ENCODE measurements at regions of chr3 and their contacts with region 1.

Region 1: DNA sequence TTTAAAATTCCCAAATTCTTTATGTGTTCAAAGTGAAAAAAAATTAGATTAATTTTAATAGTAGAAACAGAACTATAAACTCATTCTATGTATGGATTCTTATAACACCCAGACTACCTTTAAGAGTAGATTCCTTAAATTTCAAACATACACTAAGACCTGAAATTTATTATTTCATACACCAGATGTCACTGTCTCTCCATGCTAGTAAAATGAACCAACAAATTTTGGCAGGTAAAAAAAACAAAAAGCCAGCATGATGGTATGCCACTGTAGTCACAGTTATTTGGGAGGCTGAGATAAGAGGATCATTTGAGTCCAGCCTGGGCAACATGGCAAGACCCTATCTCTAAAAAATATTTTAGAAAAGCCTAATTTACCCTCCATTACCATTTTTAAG is 461.3 kb upstream of the NAALADL2 start:
- DNase-seq: peak; percentile 31
- H3K4me3 ChIP-seq: no peak overlapping the region
- H3K27ac ChIP-seq: no peak overlapping the region
- H3K4me1 ChIP-seq: no peaks in the 10 kb centered on the region
- H3K27me3 ChIP-seq: no peaks in the 10 kb centered on the region
- CTCF ChIP-seq: peak; percentile 28 to 59

Region 2: GRCh38 chr3:173993299-173993698 is 404.5 kb before region 1 on chr3:
- CTCF ChIA-PET with region 1: no interaction called
- dilution Hi-C with region 1: no loop called
- in situ Hi-C with region 1: no loop called
- intact Hi-C with region 1: loop called (anchors 5 kb)
- DNase-seq: peak; percentile 11
- H3K4me3 ChIP-seq: no peak overlapping the region
- H3K27ac ChIP-seq: no peak overlapping the region
- H3K4me1 ChIP-seq: no peaks in the 10 kb centered on the region
- H3K27me3 ChIP-seq: no peaks in the 10 kb centered on the region
- CTCF ChIP-seq: peak in 1 of 2 donors; percentile 47

Region 3: GRCh38 chr3:174620138-174620537 is 222.3 kb after region 1 on chr3:
- CTCF ChIA-PET with region 1: no interaction called
- dilution Hi-C with region 1: no loop called
- in situ Hi-C with region 1: no loop called
- intact Hi-C with region 1: loop called (anchors 2 kb)
- DNase-seq: peak; percentile 9
- H3K4me3 ChIP-seq: no peak overlapping the region
- H3K27ac ChIP-seq: no peak overlapping the region
- H3K4me1 ChIP-seq: no peaks in the 10 kb centered on the region
- H3K27me3 ChIP-seq: no peaks in the 10 kb centered on the region
- CTCF ChIP-seq: peak; percentile 38 to 46

Region 4: DNA sequence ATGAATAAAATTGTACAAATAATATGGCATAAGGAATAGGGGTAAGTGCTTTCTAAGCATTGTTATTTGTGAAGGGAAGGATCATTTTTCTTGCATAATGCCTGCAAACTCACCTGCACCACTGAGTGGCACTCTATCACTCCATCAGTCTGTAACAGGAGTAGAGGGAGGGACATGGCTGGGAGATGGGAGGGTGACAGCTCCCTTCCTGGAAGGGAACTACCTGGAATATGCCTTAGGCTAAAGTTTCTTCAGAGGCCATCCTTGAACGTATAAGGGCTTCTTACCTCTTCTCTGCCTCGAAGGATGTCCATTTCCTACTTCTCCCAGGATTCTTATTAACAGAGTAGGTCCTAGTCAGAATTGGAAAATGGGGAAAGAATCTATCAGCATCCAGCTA is 464.3 kb after region 1 on chr3:
- CTCF ChIA-PET with region 1: interaction called, 3 read pairs
- dilution Hi-C with region 1: no loop called
- in situ Hi-C with region 1: no loop called
- intact Hi-C with region 1: loop called (anchors 5 kb)
- DNase-seq: peak; percentile 66
- H3K4me3 ChIP-seq: no peak overlapping the region
- H3K27ac ChIP-seq: no peak overlapping the region
- H3K4me1 ChIP-seq: peaks cover 22% of the 10 kb centered on the region
- H3K27me3 ChIP-seq: no peaks in the 10 kb centered on the region
- CTCF ChIP-seq: peak; percentile 64 to 73

Region 5: DNA sequence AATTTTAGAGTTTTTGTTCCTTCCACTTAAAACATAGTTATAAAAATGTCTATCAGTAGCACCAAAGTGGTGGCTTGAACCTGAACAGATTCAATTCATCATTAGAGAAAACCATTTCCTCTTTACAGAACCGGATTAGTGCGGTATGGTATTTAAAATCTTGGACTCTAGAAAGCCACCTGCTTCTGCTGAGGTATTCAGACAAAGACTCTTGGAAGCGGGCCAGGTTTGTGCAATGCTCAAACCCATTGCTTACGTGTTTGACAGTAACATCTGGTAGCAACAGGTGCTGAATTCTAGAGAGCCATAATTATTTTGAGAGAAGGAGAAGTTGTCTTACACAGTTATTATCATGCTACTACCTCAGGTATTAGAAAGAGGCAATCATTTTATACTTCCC is 751.8 kb after region 1 on chr3:
- CTCF ChIA-PET with region 1: no interaction called
- dilution Hi-C with region 1: no loop called
- in situ Hi-C with region 1: loop called in 1 of 2 experiments (anchors 25 kb)
- intact Hi-C with region 1: no loop called
- DNase-seq: peak; percentile 84
- H3K4me3 ChIP-seq: no peak overlapping the region
- H3K27ac ChIP-seq: no peak overlapping the region
- H3K4me1 ChIP-seq: peaks cover 18% of the 10 kb centered on the region
- H3K27me3 ChIP-seq: no peaks in the 10 kb centered on the region
- CTCF ChIP-seq: no peak

Measured in mammary epithelial cell (primary cell).